Right lobe of liver (tissue), 6 donors: ENCODE measurements at regions of chr1 and their contacts with region 1.

Region 1: GRCh38 chr1:111656086-111657017 is 36.8 kb downstream of the RAP1A start:
- DNase-seq: no peak
- ATAC-seq: peak; percentile 86 to 89 (median 88)
- H3K4me3 ChIP-seq: no peak overlapping the region
- H3K27ac ChIP-seq: no peak overlapping the region
- H3K4me1 ChIP-seq: peaks cover 0 to 32% (median 1%) of the 10 kb centered on the region in 4 donors
- H3K27me3 ChIP-seq: no peaks in the 10 kb centered on the region
- CTCF ChIP-seq: peak; percentile 61 to 82 (median 68)
- POLR2A ChIP-seq: no peak

Region 2: DNA sequence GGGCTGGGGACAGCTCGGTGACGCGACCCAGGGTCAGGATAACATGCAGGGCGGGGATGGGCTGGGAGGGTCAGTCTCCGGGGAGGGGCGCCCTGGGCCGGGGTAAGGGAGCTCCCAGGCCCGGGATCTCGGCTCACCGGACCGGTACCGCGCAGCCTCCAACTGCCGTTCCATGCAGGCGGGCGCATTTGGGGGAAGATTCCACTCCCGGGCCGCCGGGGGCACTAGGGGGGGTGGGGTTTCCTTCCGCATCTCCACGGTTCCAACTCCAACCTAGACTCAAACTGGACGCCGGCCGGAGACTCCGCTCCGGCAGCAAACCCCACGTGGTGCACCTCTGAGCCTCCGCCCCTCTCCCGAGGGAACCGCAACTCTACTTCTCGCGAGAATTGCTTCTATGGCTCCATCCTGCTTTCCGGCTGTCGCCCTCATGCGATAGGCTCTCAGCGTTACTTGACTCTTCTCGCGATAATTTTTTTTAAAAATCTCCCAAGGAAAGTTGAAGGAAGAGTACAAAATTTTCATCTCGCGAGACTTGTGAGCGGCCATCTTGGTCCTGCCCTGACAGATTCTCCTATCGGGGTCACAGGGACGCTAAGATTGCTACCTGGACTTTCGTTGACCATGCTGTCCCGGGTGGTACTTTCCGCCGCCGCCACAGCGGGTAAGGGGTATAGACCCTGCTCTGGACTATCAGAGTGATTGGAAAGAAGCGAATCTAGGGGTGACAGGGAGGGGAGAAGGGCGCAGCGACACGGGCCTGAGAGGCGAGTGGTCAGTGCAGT is 207.2 kb before region 1 on chr1 and contains the starts of genes ATP5PB and WDR77:
- intact Hi-C with region 1: no loop called
- DNase-seq: peak; percentile 92 to 97 (median 95)
- ATAC-seq: peak; percentile 94 to 99 (median 97)
- H3K4me3 ChIP-seq: peak within 1 kb of the TSS; percentile 87 to 92 (median 90)
- H3K27ac ChIP-seq: peak within 1 kb of the TSS; percentile 65 to 73 (median 71)
- H3K4me1 ChIP-seq: peaks cover 0 to 23% (median 6%) of the 10 kb centered on the region in 4 donors
- H3K27me3 ChIP-seq: no peaks in the 10 kb centered on the region
- CTCF ChIP-seq: no peak
- POLR2A ChIP-seq: peak; percentile 59
- total RNA-seq, gene ATP5PB: 128 to 152 (median 148) TPM
- total RNA-seq, gene WDR77: 11.4 to 27.3 (median 14.0) TPM

Region 3: DNA sequence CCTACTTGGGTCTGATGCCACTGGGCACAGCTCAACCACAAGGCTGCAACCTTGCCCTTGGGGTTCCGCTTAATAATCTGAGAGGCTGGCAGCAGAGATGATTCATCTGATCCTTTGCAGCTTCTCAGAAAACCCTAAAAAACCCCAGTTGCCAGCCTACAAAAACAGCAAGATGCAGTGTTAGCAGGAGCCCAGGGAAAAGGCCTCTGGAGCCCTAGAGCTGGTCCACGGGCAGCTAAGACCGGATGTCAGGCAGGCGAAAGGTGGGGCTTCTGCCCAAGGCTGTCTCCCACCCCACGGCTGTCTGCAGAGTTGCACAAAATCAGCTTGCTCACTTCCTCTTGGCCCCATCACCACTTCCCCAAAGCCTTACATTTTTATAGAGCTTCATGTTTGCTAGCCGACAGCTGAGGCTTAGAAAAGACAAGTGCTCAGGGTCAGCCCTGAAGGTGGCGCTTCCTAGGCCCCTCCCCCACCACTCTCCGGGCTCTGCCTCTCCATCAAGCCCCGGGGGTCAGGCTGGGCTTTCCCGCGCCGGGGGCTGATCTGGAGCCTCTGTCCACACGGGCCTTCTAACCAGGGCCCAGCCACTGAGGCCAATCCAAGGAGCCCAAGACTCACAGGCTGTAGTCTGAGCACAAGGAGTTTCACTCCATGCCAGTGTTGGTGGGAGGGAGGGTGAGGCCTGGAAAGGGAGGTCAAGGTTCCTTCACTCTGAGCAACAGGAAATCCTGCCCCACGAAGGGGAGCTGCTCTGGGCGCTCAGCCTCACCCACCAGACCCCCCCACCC is 148.7 kb before region 1 on chr1:
- intact Hi-C with region 1: loop called (anchors 5 to 10 kb)
- DNase-seq: peak; percentile 74 to 82 (median 76)
- ATAC-seq: peak; percentile 32 to 52 (median 38)
- H3K4me3 ChIP-seq: peak overlapping the region; percentile 14 to 43 (median 31)
- H3K27ac ChIP-seq: peak overlapping the region; percentile 75 to 82 (median 79)
- H3K4me1 ChIP-seq: peaks cover 0 to 18% (median 13%) of the 10 kb centered on the region in 4 donors
- H3K27me3 ChIP-seq: no peaks in the 10 kb centered on the region
- CTCF ChIP-seq: no peak
- POLR2A ChIP-seq: peak; percentile 31

Region 4: GRCh38 chr1:111895469-111896082 is 239.2 kb after region 1 on chr1:
- intact Hi-C with region 1: no loop called
- DNase-seq: no peak
- ATAC-seq: no peak
- H3K4me3 ChIP-seq: no peak overlapping the region
- H3K27ac ChIP-seq: no peak overlapping the region
- H3K4me1 ChIP-seq: peaks cover 0 to 4% (median 0%) of the 10 kb centered on the region in 4 donors
- H3K27me3 ChIP-seq: no peaks in the 10 kb centered on the region
- CTCF ChIP-seq: no peak
- POLR2A ChIP-seq: no peak

Region 5: DNA sequence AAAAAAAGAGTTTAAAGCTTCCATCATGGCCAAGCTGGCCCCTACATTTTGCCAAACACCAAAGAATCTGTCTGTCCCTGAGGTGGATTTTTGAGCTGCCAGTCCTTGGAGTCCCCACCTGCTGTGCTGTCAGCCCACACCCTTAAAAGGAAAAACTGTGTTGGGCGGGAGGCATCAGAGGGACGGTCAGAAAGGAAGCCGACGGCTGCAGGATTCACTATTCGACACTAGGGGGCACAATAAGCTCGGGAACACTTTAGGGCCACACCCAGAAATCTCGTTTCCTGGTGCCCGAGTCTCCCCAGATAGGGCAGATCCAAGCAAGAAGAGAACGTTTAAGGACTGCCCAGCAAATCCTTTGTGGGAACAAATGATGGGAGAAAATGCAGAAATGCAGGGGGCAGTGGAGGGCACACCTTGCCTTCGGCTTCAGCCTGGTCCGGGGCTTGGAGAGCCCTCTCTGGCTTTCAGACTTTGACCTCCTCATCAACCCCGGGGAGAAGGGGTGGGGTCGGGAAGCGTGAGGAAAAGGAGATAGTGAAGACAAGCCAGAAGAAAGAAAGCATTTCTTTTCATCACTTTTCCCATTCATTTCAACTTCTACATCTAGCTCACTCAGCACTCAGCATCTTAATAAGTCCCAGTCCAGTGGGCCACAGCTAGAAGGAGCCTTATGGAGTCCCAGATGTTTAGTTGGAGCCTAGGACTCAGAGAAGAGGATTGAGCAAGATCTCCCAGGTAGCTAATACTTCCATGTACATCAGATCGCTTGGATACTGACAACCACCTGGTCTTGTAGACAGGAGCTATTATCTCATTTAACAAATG is 734.6 kb after region 1 on chr1:
- intact Hi-C with region 1: no loop called
- DNase-seq: peak; percentile 73 to 83 (median 77)
- ATAC-seq: peak; percentile 93 to 95 (median 94)
- H3K4me3 ChIP-seq: peak overlapping the region; percentile 21 to 33 (median 33)
- H3K27ac ChIP-seq: peak overlapping the region; percentile 36 to 52 (median 45)
- H3K4me1 ChIP-seq: peaks cover 0 to 9% (median 0%) of the 10 kb centered on the region in 4 donors
- H3K27me3 ChIP-seq: no peaks in the 10 kb centered on the region
- CTCF ChIP-seq: peak; percentile 89 to 95 (median 91)
- POLR2A ChIP-seq: no peak